ENCODE measurements at regions of chr17 and their contacts with region 1.

Region 1: GRCh38 chr17:75012346-75013091 is at the start of gene MRPL58:
- DNase-seq: peak; percentile 81
- H3K4me3 ChIP-seq: peak within 1 kb of the TSS; percentile 56 to 89 (median 83)
- H3K27ac ChIP-seq: peak within 1 kb of the TSS; percentile 67
- H3K4me1 ChIP-seq: peaks cover 16% of the 10 kb centered on the region
- H3K27me3 ChIP-seq: no peaks in the 10 kb centered on the region
- CTCF ChIP-seq: peak; percentile 40 to 76
- POLR2A ChIP-seq: peak; percentile 84
- total RNA-seq, gene MRPL58: 38.0 and 38.8 TPM in 2 replicates

Region 2: DNA sequence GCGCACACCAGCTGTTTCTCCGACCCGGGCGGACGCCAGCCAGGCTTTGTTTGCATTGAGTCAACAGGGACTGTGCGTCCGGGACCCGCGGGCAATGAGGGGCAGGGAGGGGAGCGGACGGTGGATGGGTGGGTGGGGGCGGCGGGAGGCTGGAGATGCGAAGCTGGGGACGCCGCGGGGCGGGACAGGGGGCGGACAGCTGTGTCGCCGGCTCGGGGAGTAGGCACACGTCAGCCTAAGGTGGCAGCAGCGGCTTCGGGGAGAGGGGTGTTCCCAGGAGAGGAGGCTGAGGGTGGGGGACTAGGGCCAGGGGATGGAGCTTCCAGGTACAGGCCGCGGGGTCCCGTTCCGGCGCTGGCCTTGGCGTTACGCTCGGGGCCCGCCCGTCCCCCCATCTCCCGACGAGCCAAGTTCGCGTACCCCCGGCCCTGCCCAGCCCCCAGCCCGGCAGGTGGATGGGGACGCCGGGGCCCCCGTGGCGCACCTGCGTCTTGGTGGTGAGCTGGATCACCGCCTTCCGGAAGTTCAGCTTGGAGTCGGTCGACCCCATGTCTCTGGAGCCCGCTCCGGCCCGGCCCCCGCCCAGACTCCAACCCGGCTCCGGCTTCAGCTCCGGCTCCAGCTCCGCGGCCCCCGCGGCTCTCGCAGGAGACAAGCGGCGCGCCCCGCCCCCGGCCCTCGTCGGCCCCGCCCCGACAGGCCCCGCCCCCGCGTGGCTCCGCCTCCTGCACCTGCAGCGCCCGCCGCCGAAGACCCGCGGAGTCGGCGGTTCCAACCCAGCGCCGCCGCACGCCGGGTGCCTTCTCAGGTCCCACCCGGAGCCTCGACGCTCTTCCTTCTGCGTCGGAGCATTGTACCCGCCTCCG is 40.2 kb before region 1 on chr17 and contains the start of gene HID1:
- CTCF ChIA-PET with region 1: interaction called, 11 read pairs
- POLR2A ChIA-PET with region 1: no interaction called
- dilution Hi-C with region 1: no loop called
- intact Hi-C with region 1: no loop called
- DNase-seq: peak; percentile 39
- H3K4me3 ChIP-seq: peak within 1 kb of the TSS; percentile 51 to 89 (median 74)
- H3K27ac ChIP-seq: no peak within 1 kb of the TSS
- H3K4me1 ChIP-seq: peaks cover 17% of the 10 kb centered on the region
- H3K27me3 ChIP-seq: peaks cover 5% of the 10 kb centered on the region in 2 experiments
- CTCF ChIP-seq: no peak
- POLR2A ChIP-seq: no peak
- total RNA-seq, gene HID1: 36.8 and 41.4 TPM in 2 replicates

Region 3: DNA sequence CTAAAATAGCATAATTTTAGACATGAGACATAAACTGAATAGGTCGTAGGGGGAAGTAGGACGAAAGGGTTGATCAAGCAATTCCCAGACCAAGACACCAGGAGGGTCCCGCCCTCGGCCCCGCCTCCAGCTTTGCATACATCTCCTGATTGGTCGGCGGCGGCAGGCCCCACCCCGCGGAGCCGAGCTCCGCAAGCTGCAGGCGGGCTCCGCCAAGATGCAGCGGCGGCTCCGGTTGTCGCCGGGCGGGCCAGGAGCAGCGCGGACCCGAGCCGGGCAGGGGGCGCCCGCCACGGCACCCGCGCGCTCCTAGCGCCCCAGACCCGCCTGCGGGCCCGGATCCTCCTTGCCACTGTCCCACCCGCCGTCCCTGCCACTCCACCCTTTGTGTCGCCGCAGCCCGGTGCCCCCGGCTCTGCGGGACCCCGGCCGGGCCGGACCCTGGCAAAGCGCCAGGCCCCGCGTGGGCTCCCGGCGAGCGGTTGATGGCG is 25.1 kb before region 1 on chr17 and contains the start of gene CDR2L:
- CTCF ChIA-PET with region 1: interaction called, 33 read pairs
- POLR2A ChIA-PET with region 1: interaction called, 17 read pairs
- dilution Hi-C with region 1: no loop called
- intact Hi-C with region 1: loop called (anchors 1 kb)
- DNase-seq: peak; percentile 95
- H3K4me3 ChIP-seq: peak within 1 kb of the TSS; percentile 47 to 89 (median 67)
- H3K27ac ChIP-seq: peak within 1 kb of the TSS; percentile 93
- H3K4me1 ChIP-seq: peaks cover 12% of the 10 kb centered on the region
- H3K27me3 ChIP-seq: no peaks in the 10 kb centered on the region
- CTCF ChIP-seq: no peak
- POLR2A ChIP-seq: peak; percentile 52
- total RNA-seq, gene CDR2L: 34.9 and 36.7 TPM in 2 replicates

Region 4: DNA sequence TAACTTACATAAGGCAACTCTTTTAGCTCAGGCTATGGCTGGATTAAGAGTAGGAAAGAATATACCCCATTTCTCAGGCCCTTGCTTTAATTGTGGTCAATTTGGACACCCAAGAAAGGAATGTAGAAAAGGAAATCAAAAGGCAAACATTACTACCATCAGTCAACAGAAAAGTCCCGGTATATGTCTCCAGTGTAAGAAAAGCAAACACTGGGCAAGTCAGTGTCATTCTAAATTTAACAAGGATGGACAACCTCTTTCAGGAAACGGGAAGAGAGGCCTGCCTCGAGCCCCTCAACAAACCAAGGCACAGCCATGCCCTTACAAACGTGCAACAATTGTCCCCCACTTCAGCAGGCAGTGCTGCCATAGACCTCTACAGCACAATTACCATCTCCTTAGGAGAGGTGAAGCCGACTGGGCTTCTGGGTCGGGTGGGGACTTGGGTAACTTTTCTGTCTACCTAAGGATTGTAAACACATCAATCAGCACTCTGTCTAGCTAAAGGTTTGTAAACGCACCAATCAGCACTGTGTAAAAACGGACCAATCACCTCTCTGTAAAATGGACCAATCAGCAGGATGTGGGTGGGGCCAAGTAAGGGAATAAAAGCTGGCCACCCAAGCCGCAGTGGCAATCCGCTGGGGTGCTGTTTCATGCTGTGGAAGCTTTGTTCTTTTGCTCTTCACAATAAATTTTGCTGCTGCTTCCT is 12.3 kb after region 1 on chr17:
- CTCF ChIA-PET with region 1: interaction called, 13 read pairs
- POLR2A ChIA-PET with region 1: no interaction called
- dilution Hi-C with region 1: no loop called
- intact Hi-C with region 1: no loop called
- DNase-seq: no peak
- H3K4me3 ChIP-seq: no peak overlapping the region
- H3K27ac ChIP-seq: no peak overlapping the region
- H3K4me1 ChIP-seq: no peaks in the 10 kb centered on the region
- H3K27me3 ChIP-seq: no peaks in the 10 kb centered on the region
- CTCF ChIP-seq: no peak
- POLR2A ChIP-seq: no peak

Region 5: GRCh38 chr17:75087558-75088453 is 75.3 kb after region 1 on chr17 and contains the start of gene SLC16A5:
- CTCF ChIA-PET with region 1: no interaction called
- POLR2A ChIA-PET with region 1: no interaction called
- dilution Hi-C with region 1: no loop called
- intact Hi-C with region 1: no loop called
- DNase-seq: peak; percentile 81
- H3K4me3 ChIP-seq: peak within 1 kb of the TSS; percentile 23 to 52 (median 46)
- H3K27ac ChIP-seq: peak within 1 kb of the TSS; percentile 88
- H3K4me1 ChIP-seq: peaks cover 42% of the 10 kb centered on the region
- H3K27me3 ChIP-seq: no peaks in the 10 kb centered on the region
- CTCF ChIP-seq: no peak
- POLR2A ChIP-seq: peak; percentile 74
- total RNA-seq, gene SLC16A5: 16.4 and 17.4 TPM in 2 replicates

Measured in endothelial cell of umbilical vein (primary cell).